ENCODE measurements at regions of chr5 and their contacts with region 1.

Region 1: GRCh38 chr5:119070828-119071572 is at the start of gene DMXL1:
- DNase-seq: peak; percentile 99
- ATAC-seq: peak; percentile 93
- H3K4me3 ChIP-seq: peak within 1 kb of the TSS; percentile 80 to 87
- H3K27ac ChIP-seq: peak within 1 kb of the TSS; percentile 70
- H3K4me1 ChIP-seq: peaks cover 10 to 13% of the 10 kb centered on the region in 2 experiments; a peak in 3 of 4 replicates
- H3K27me3 ChIP-seq: no peaks in the 10 kb centered on the region
- CTCF ChIP-seq: no peak
- POLR2A ChIP-seq: no peak
- RAD21 ChIP-seq: no peak
- total RNA-seq, gene DMXL1: 21.1 TPM

Region 2: DNA sequence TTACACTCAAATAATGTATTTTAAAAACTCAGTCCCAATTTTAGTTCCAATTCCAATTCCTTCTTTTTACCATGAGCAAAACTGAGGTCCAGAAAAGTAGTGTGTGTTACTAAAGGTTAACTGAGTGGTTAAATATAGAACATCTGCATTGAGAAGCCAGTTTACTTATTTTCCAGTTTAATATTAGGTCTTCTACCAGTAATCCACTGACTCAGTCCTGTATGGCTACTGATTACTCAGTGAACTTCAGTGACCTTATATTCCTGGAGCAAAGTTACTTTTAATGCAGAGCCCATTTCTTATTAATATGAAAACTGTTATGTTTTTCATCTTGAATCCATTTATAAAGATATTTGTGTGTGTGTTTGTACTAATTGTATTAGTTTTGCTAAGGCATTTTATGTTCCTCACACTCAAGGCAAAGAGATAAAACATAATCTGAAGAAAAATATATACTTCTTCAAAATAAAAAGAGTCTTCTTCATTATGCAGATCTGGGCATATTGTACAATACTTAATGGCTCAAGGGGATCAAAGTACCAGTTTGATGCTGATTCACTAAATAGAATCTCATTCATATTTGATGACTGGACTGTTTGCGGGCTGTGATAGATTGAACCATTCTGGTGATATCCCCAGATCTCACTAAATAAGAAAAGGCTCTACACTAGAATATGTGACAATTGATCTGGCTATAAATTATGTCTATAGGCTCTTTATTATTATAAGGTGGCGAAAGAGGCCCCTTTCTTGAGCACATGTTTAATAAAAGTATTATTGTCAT is 60.7 kb after region 1 on chr5:
- CTCF ChIA-PET with region 1: no interaction called
- POLR2A ChIA-PET with region 1: no interaction called
- RAD21 ChIA-PET with region 1: no interaction called
- intact Hi-C with region 1: no loop called
- DNase-seq: no peak
- ATAC-seq: no peak
- H3K4me3 ChIP-seq: no peak overlapping the region
- H3K27ac ChIP-seq: no peak overlapping the region
- H3K4me1 ChIP-seq: no peaks in the 10 kb centered on the region
- H3K27me3 ChIP-seq: no peaks in the 10 kb centered on the region
- CTCF ChIP-seq: no peak
- POLR2A ChIP-seq: no peak
- RAD21 ChIP-seq: no peak

Region 3: DNA sequence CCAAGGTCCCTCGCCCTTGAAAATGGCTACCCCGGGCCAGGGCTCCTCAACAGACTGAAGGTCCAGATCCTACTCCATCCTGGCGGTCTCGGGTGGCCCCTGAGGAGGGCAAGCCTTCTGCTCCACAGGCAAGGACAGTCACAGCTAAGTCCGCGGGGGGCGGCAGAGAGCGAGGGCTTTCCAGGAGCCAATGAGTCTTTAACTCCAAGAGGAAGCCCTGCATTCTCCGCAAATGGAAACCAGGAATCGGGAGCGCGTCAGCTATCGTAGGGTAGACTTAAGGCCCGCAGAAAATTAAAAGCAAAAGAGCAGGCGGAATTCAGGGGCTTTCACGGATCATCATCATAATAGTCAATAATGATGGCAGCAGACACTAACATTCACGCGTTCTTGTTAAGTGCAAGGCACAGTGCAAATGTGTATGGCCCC is 197.0 kb after region 1 on chr5:
- CTCF ChIA-PET with region 1: no interaction called
- POLR2A ChIA-PET with region 1: no interaction called
- RAD21 ChIA-PET with region 1: no interaction called
- intact Hi-C with region 1: loop called (anchors 2 kb)
- DNase-seq: peak; percentile 62
- ATAC-seq: peak; percentile 67
- H3K4me3 ChIP-seq: peak overlapping the region; percentile 70 to 84
- H3K27ac ChIP-seq: peak overlapping the region; percentile 72; the same call in 1 of the 2 replicates
- H3K4me1 ChIP-seq: peaks cover 11 to 24% of the 10 kb centered on the region in 2 experiments
- H3K27me3 ChIP-seq: no peaks in the 10 kb centered on the region
- CTCF ChIP-seq: no peak
- POLR2A ChIP-seq: no peak
- RAD21 ChIP-seq: no peak; the same call in 1 of the 2 replicates

Region 4: GRCh38 chr5:119564325-119564724 is 493.3 kb after region 1 on chr5:
- CTCF ChIA-PET with region 1: no interaction called
- POLR2A ChIA-PET with region 1: no interaction called
- RAD21 ChIA-PET with region 1: no interaction called
- intact Hi-C with region 1: no loop called
- DNase-seq: no peak
- ATAC-seq: no peak
- H3K4me3 ChIP-seq: no peak overlapping the region
- H3K27ac ChIP-seq: no peak overlapping the region
- H3K4me1 ChIP-seq: no peaks in the 10 kb centered on the region
- H3K27me3 ChIP-seq: no peaks in the 10 kb centered on the region
- CTCF ChIP-seq: no peak
- POLR2A ChIP-seq: no peak
- RAD21 ChIP-seq: no peak

Measured in HCT116 (cell line).